ENCODE measurements at regions of chr17 and their contacts with region 1.

Region 1: GRCh38 chr17:17729620-17730249 is 48.5 kb downstream of the RAI1 start:
- DNase-seq: peak; percentile 76
- ATAC-seq: peak; percentile 66
- H3K4me3 ChIP-seq: no peak overlapping the region
- H3K27ac ChIP-seq: peak overlapping the region; percentile 64
- H3K4me1 ChIP-seq: peaks cover 37% of the 10 kb centered on the region
- H3K27me3 ChIP-seq: no peaks in the 10 kb centered on the region
- CTCF ChIP-seq: peak; percentile 91

Region 2: DNA sequence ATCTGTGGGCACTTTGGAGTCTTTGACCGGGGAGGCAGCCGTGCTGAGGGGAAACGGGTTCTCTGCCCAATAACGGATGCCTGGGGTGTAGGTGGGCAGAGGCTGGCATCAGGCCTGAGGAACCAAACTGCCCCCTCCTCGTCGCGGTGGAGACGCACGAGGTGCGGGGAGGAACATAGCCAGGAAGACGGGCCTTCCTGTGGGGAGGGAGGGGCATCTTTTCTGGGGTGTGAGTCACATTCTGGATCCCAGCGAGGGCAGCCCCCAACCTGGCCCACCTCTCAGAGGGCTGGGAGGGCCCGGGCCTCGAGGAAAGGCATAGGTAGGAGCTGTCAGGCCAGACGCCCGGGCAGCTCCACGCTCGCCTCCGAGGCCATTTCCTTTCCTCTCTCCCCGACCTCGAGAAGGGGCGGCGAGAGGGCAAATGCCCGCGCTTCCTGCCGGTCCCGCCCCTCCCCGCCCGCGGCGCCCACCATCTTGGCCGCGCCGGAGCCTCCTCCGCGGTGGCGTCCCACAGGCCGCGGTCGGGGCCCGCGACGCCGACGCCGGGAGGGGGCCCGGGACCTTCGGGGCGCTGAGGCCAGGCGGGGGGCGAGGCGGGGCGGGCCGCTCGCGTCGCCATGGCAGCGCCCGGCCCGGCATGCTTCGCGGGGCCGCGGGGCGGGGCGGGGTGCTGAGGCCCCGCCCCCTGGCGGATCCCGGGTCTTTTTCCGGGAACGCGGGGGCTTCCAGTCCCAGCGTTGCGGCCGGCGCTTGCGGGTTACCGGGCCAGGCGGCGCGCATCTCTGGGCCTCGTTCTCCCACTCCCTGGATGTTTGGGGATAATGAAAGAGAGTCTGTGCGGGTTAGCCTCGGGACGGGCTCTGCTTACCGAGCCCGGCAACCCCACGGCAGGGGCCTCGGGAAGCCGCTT is 35.3 kb before region 1 on chr17:
- CTCF ChIA-PET with region 1: no interaction called
- POLR2A ChIA-PET with region 1: no interaction called
- intact Hi-C with region 1: loop called (anchors 2 kb)
- DNase-seq: peak; percentile 78
- ATAC-seq: peak; percentile 49
- H3K4me3 ChIP-seq: peak overlapping the region; percentile 86
- H3K27ac ChIP-seq: peak overlapping the region; percentile 96
- H3K4me1 ChIP-seq: peaks cover 66% of the 10 kb centered on the region
- H3K27me3 ChIP-seq: no peaks in the 10 kb centered on the region
- CTCF ChIP-seq: no peak

Region 3: GRCh38 chr17:17710728-17711541 is 18.8 kb before region 1 on chr17:
- CTCF ChIA-PET with region 1: no interaction called
- POLR2A ChIA-PET with region 1: no interaction called
- intact Hi-C with region 1: loop called (anchors 1 kb)
- DNase-seq: peak; percentile 95
- ATAC-seq: peak; percentile 95
- H3K4me3 ChIP-seq: peak overlapping the region; percentile 6; the same call in 1 of the 2 replicates
- H3K27ac ChIP-seq: peak overlapping the region; percentile 82
- H3K4me1 ChIP-seq: peaks cover 34% of the 10 kb centered on the region
- H3K27me3 ChIP-seq: no peaks in the 10 kb centered on the region
- CTCF ChIP-seq: no peak

Measured in PC-3 (cell line).